ENCODE measurements at regions of chr13 and their contacts with region 1.

Region 1: GRCh38 chr13:41668130-41668757 is 210.9 kb downstream of the RGCC start:
- DNase-seq: peak; percentile 60
- ATAC-seq: peak; percentile 91
- H3K4me3 Mint-ChIP-seq: no peak overlapping the region
- H3K27ac Mint-ChIP-seq: no peak overlapping the region
- H3K4me1 Mint-ChIP-seq: no peaks in the 10 kb centered on the region
- H3K27me3 Mint-ChIP-seq: no peaks in the 10 kb centered on the region

Region 2: DNA sequence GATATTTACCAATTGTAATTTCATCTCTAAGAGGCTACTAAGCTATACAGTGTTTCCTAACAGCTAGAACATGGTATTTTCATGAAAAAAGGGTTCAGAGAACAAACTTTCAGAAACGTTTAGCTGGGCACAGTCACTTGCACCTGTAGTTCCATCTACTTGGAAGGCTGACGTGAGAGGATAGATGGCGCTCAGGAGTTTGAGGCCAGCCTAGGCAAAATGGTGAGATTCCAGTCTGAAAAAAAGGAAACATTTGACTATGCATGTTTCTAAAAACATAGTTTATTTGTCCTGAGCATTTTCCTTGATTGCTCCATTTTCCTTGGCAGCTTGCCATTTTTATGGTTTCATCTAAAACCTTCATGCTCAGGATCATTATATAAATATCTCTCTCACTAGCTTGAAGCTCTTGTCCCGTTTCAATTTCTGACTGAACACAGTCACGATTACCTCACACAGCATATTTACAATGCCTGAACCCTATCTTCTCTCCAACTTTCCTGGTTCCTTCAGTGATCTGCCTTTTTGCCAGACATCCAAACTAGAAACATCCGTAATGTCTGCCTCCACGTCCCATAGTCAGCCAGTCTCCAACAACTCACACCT is 10.1 kb before region 1 on chr13:
- CTCF ChIA-PET with region 1: interaction called, 15 read pairs
- DNase-seq: no peak
- ATAC-seq: no peak
- H3K4me3 Mint-ChIP-seq: no peak overlapping the region
- H3K27ac Mint-ChIP-seq: no peak overlapping the region
- H3K4me1 Mint-ChIP-seq: no peaks in the 10 kb centered on the region
- H3K27me3 Mint-ChIP-seq: no peaks in the 10 kb centered on the region

Region 3: GRCh38 chr13:41694545-41695301 is 26.5 kb after region 1 on chr13:
- CTCF ChIA-PET with region 1: no interaction called
- DNase-seq: no peak
- ATAC-seq: no peak
- H3K4me3 Mint-ChIP-seq: no peak overlapping the region
- H3K27ac Mint-ChIP-seq: no peak overlapping the region
- H3K4me1 Mint-ChIP-seq: no peaks in the 10 kb centered on the region
- H3K27me3 Mint-ChIP-seq: no peaks in the 10 kb centered on the region

Region 4: GRCh38 chr13:41751277-41751676 is 83.0 kb after region 1 on chr13:
- CTCF ChIA-PET with region 1: no interaction called
- DNase-seq: no peak
- ATAC-seq: no peak
- H3K4me3 Mint-ChIP-seq: no peak overlapping the region
- H3K27ac Mint-ChIP-seq: no peak overlapping the region
- H3K4me1 Mint-ChIP-seq: no peaks in the 10 kb centered on the region
- H3K27me3 Mint-ChIP-seq: no peaks in the 10 kb centered on the region

Region 5: DNA sequence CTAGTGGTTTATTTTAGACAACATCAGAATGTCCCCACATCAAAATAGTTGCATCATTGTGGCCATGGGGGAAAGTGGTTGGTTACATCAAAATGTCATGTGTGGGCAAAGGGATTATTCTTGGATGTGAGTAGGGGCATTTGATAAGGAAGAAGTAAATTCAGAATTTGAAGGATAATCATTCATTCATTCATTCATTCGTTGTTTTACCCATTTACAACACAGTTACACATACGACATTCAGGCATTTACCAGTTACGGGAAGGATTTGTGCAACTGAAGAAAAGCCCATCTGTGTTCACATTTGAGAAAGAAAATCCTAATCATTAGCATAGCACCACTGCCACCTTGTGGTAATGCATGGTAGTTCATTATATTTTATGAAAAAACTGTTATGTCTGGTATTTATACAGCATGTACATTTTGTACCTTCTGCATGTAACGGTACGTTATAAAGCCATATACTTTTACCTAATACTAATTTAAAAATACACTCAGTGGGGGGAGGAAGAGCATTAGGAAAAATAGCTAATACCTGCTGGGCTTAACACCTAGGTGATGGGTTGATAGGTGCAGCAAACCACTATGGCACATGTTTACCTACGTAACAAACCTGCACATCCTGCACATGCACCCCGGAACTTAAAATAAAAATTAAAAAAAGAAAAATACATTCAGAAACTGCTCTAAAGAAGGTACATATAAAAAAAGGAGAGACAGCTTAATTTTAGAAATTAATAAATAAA is 442.3 kb after region 1 on chr13:
- CTCF ChIA-PET with region 1: interaction called, 56 read pairs
- DNase-seq: no peak
- ATAC-seq: peak; percentile 39
- H3K4me3 Mint-ChIP-seq: no peak overlapping the region
- H3K27ac Mint-ChIP-seq: no peak overlapping the region
- H3K4me1 Mint-ChIP-seq: peaks cover 5% of the 10 kb centered on the region
- H3K27me3 Mint-ChIP-seq: no peaks in the 10 kb centered on the region

Measured in activated CD8-positive, alpha-beta memory T cell treated with anti-CD3 and anti-CD28 coated beads, Interleukin-2, amount 10 ng/mL, durations not matched to agents 7 days and 5 days (primary cell).